Transverse colon (tissue), 4 donors: ENCODE measurements at regions of chr9 and their contacts with region 1.

Region 1: DNA sequence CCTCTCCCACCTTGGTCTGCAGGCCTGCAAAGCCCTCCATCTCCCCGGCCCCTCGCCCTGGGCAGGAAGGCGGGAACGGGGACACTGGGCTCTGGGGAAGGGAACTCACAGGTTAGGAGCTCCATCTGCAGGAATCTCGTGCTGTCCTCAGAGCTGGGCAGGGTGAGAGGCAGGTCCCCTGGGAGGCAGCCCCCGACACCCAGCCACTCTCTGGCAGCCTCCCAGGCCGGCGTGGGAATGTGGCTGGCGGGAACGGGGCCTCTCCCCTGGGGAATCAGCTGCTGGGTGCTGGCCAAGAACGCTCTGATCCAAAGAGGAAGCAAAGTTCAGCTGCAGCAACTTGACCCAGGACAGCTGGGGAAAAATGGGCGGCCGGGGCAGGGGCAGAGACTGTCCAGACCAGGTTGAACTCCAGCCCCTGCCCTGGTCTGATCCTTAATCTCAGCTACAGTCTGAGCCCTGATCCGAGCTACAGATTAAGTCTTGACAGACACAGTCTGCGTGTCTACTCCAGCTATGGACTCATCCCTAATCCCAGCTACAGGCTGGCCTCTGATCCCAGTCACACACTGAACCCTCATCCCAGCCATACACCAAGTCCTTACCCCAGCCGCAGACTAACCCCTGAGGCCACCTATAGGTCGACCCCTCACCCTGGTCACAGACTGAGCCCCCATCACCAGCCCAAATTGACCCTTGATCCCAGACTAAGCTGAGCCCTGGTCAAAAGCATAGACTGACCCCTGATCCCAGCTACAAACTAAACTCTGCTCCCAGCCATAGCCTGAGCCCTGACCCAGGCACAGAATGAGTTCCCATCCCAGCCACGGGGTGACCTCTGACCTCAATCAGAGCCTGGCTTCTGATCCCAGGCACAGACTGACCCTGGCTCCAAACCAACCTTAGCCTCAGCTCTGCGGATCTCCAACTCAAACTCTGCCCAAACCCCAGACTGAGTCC is 37.3 kb upstream of the EGFL7 start:
- DNase-seq: peak; percentile 91
- H3K4me3 ChIP-seq: no peak overlapping the region
- H3K27ac ChIP-seq: peak overlapping the region; percentile 14 to 71 (median 46)
- H3K4me1 ChIP-seq: peaks cover 25 to 66% (median 48%) of the 10 kb centered on the region in 4 donors
- H3K27me3 ChIP-seq: no peaks in the 10 kb centered on the region
- CTCF ChIP-seq: peak; percentile 18 to 39 (median 32)
- EP300 ChIP-seq: no peak
- POLR2A ChIP-seq: no peak

Region 2: DNA sequence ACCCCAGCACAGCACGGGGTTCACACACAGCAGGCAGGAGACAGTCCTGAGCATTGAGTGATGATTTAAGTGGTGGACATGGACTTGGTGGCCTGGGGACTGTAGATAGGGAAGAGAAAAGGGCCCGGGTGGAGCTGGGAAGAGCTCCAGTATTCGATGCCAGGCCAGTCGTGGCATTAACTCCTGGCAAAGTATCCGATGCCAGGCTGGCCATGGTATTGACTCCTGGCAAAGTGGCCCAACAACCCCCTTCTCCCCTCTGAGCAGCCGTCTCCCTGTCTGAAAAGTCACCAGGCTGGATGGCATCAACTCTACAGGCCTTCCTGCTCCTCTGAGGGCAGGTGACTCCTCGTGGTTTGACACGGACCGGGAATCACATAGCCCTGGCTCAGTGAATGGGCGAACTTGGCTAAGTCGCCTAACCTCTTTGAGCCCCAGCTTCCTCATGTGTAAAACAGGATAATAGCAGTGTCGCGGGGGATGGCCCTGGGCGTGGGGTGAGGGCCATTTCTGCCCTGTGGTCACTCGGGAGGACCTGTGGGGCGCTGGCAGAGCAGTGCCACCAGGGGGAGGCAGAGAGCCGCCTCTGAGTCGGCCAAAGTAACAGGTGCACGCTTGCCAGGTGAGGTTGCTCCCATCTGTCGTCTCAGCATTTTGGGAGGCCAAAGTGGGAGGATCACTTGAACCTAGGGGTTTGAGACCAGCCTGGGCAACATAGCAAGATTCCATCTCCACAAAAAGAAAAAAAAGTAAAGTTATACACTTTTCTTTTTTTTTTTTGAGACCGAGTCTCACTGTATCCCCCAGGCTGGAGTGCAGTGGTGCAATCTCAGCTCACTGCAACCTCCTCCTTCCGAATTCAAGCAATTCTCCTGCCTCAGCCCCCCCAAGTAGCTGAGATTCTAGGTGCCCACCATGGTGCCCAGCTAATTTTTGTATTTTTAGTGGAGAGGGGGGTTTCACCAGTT is 136.8 kb before region 1 on chr9:
- in situ Hi-C with region 1: loop called in 2 of 4 experiments (anchors 5 to 10 kb)
- intact Hi-C with region 1: loop called (anchors 2 kb)
- DNase-seq: peak; percentile 84
- H3K4me3 ChIP-seq: no peak overlapping the region
- H3K27ac ChIP-seq: no peak overlapping the region
- H3K4me1 ChIP-seq: peaks cover 10 to 16% (median 12%) of the 10 kb centered on the region in 4 donors
- H3K27me3 ChIP-seq: no peaks in the 10 kb centered on the region
- CTCF ChIP-seq: peak; percentile 98 to 99 (median 99)
- EP300 ChIP-seq: no peak
- POLR2A ChIP-seq: no peak